Activated B cell treated with CpG ODN at 0.5 μM for 24 hours (primary cell): ENCODE measurements at regions of chr22 and their contacts with region 1.

Region 1: GRCh38 chr22:50620593-50621355 is 7.2 kb downstream of the ARSA start:
- DNase-seq: peak; percentile 74
- ATAC-seq: peak; percentile 79
- H3K4me3 Mint-ChIP-seq: peak overlapping the region; percentile 85
- H3K27ac Mint-ChIP-seq: peak overlapping the region; percentile 94
- H3K4me1 Mint-ChIP-seq: peaks cover 32% of the 10 kb centered on the region
- H3K27me3 Mint-ChIP-seq: no peaks in the 10 kb centered on the region
- CTCF ChIP-seq: no peak

Region 2: GRCh38 chr22:50148991-50149721 is 471.6 kb before region 1 on chr22:
- CTCF ChIA-PET with region 1: interaction called, 3 read pairs
- POLR2A ChIA-PET with region 1: no interaction called
- intact Hi-C with region 1: loop called (anchors 1 kb)
- DNase-seq: peak; percentile 67
- ATAC-seq: peak; percentile 98
- H3K4me3 Mint-ChIP-seq: no peak overlapping the region
- H3K27ac Mint-ChIP-seq: no peak overlapping the region
- H3K4me1 Mint-ChIP-seq: peaks cover 4% of the 10 kb centered on the region
- H3K27me3 Mint-ChIP-seq: no peaks in the 10 kb centered on the region
- CTCF ChIP-seq: peak; percentile 66

Region 3: DNA sequence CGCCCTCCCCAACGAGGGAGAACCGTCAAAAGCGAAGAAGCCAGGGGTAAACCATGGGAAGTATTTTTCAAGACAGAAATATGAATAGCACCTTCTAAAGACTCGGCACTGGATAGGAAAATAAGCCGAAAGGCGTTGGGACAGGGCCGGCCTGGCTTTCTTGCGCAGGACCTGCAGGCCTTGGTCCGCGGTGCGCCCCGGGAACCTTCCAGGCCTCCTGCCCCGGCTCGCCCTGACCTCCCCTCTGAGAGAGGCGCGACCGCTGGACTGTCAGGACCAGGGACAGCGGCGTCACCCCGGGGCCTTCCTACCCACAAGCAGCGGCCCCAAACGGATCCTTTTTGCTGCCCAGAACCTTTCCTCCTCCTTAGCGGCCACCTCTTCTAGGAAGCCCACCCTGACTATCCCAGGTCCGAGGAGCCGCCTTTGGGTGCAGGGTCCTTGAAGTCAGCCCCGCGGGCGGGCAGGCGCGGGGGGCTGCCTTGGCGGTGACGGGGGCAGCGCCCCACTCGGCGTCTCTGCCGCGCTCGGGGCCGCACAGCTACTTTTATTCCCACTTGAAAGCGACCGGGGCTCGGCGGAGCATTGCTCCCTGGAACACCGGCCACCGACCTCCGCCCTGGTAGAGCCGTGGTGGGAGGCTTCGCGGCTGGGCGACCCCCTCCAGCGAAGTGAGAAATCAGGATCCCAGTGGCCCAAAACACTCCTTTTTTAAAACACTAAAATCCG is 349.9 kb before region 1 on chr22:
- CTCF ChIA-PET with region 1: no interaction called
- POLR2A ChIA-PET with region 1: no interaction called
- intact Hi-C with region 1: loop called (anchors 1 kb)
- DNase-seq: peak; percentile 67
- ATAC-seq: peak; percentile 46
- H3K4me3 Mint-ChIP-seq: peak overlapping the region; percentile 73
- H3K27ac Mint-ChIP-seq: no peak overlapping the region
- H3K4me1 Mint-ChIP-seq: peaks cover 17% of the 10 kb centered on the region
- H3K27me3 Mint-ChIP-seq: no peaks in the 10 kb centered on the region
- CTCF ChIP-seq: no peak

Region 4: DNA sequence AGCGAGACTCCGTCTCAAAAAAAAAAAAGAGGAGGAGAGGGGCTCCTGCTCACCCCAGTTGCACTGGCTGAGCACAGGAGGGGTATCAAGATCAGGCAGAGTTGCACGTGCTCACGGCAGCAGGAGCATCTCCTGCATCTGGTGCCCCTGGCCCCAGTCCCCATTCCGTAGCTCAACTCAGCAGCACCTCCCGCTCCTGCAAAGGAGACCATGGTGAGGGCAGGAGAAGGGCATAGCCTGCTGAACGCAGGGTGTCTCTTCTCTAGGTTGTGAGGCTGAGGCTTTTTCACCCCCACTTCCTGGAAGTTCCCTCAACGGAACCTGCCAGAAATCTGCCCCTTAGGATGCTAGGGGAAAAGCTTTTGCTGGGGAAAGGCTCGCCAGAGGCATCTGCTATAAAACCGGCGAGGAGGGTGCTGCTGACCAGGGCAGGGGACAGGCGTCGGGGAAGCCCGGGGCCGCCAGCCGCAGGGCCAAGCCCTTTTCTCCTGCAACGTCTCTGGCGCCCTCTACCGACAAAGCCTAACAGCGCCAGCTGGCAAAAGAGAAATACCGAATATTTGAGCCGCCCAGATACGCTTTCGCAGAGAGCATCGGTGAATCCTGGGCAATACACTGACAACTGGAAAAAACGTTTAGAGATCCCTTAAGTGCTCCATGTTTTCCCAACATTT is 278.7 kb before region 1 on chr22:
- CTCF ChIA-PET with region 1: interaction called, 7 read pairs
- POLR2A ChIA-PET with region 1: no interaction called
- intact Hi-C with region 1: loop called (anchors 2 kb)
- DNase-seq: peak; percentile 80
- ATAC-seq: peak; percentile 61
- H3K4me3 Mint-ChIP-seq: peak overlapping the region; percentile 83
- H3K27ac Mint-ChIP-seq: peak overlapping the region; percentile 89
- H3K4me1 Mint-ChIP-seq: peaks cover 12% of the 10 kb centered on the region
- H3K27me3 Mint-ChIP-seq: no peaks in the 10 kb centered on the region
- CTCF ChIP-seq: peak; percentile 91

Region 5: GRCh38 chr22:50498322-50498890 is 122.4 kb before region 1 on chr22:
- CTCF ChIA-PET with region 1: interaction called, 9 read pairs
- POLR2A ChIA-PET with region 1: interaction called, 7 read pairs
- intact Hi-C with region 1: loop called (anchors 1 kb)
- DNase-seq: peak; percentile 38
- ATAC-seq: peak; percentile 95
- H3K4me3 Mint-ChIP-seq: no peak overlapping the region
- H3K27ac Mint-ChIP-seq: no peak overlapping the region
- H3K4me1 Mint-ChIP-seq: peaks cover 3% of the 10 kb centered on the region
- H3K27me3 Mint-ChIP-seq: no peaks in the 10 kb centered on the region
- CTCF ChIP-seq: no peak

Region 6: DNA sequence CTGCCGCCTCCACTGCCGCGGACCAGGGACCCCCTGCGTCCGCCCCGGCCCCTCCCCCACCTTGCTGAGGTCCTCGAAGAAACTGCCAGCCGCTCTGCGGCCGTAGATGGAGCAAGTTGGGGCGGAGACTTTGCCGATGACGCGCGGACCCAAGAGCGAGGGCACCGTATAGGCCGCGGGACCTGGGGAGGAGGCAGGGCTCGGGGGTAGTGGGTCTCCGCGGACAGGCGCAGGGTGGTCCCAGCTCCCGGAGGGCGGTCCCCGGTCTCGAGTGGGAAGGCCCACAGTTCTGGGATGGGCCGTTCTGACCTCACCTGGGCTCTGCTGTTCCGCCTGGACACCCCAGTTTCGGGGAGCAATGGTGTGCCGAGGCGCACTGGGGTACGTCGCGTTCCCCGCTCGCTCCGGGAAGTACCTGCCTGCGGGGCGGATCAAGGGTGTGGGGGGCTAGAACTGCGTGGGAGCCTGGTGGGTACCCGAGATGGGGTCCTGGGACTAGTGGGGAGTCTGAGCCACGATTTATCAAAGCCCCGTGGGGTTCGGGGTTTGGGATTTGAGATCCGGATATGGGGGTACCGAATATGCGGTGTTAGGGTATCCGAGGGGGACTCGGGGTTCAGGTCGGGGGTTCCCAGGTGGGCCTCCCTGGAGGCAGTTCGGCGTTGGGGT is 89.8 kb before region 1 on chr22:
- CTCF ChIA-PET with region 1: interaction called, 40 read pairs
- POLR2A ChIA-PET with region 1: interaction called, 94 read pairs
- intact Hi-C with region 1: loop called (anchors 1 kb)
- DNase-seq: peak; percentile 86
- ATAC-seq: peak; percentile 53
- H3K4me3 Mint-ChIP-seq: peak overlapping the region; percentile 92
- H3K27ac Mint-ChIP-seq: peak overlapping the region; percentile 99
- H3K4me1 Mint-ChIP-seq: peaks cover 55% of the 10 kb centered on the region
- H3K27me3 Mint-ChIP-seq: no peaks in the 10 kb centered on the region
- CTCF ChIP-seq: no peak

Region 7: GRCh38 chr22:50562523-50563412 is 58.0 kb before region 1 on chr22 and contains the start of gene SYCE3:
- CTCF ChIA-PET with region 1: interaction called, 11 read pairs
- POLR2A ChIA-PET with region 1: interaction called, 20 read pairs
- intact Hi-C with region 1: loop called (anchors 1 kb)
- DNase-seq: peak; percentile 97
- ATAC-seq: peak; percentile 98
- H3K4me3 Mint-ChIP-seq: peak within 1 kb of the TSS; percentile 95
- H3K27ac Mint-ChIP-seq: peak within 1 kb of the TSS; percentile 81
- H3K4me1 Mint-ChIP-seq: peaks cover 15% of the 10 kb centered on the region
- H3K27me3 Mint-ChIP-seq: peaks cover 1% of the 10 kb centered on the region
- CTCF ChIP-seq: peak; percentile 38
- total RNA-seq, gene SYCE3: not detected in 2 replicates

Region 8: GRCh38 chr22:50610041-50610451 is 10.7 kb before region 1 on chr22:
- CTCF ChIA-PET with region 1: no interaction called
- POLR2A ChIA-PET with region 1: no interaction called
- intact Hi-C with region 1: no loop called
- DNase-seq: no peak
- ATAC-seq: no peak
- H3K4me3 Mint-ChIP-seq: no peak overlapping the region
- H3K27ac Mint-ChIP-seq: no peak overlapping the region
- H3K4me1 Mint-ChIP-seq: no peaks in the 10 kb centered on the region
- H3K27me3 Mint-ChIP-seq: peaks cover 42% of the 10 kb centered on the region
- CTCF ChIP-seq: no peak

Region 9: DNA sequence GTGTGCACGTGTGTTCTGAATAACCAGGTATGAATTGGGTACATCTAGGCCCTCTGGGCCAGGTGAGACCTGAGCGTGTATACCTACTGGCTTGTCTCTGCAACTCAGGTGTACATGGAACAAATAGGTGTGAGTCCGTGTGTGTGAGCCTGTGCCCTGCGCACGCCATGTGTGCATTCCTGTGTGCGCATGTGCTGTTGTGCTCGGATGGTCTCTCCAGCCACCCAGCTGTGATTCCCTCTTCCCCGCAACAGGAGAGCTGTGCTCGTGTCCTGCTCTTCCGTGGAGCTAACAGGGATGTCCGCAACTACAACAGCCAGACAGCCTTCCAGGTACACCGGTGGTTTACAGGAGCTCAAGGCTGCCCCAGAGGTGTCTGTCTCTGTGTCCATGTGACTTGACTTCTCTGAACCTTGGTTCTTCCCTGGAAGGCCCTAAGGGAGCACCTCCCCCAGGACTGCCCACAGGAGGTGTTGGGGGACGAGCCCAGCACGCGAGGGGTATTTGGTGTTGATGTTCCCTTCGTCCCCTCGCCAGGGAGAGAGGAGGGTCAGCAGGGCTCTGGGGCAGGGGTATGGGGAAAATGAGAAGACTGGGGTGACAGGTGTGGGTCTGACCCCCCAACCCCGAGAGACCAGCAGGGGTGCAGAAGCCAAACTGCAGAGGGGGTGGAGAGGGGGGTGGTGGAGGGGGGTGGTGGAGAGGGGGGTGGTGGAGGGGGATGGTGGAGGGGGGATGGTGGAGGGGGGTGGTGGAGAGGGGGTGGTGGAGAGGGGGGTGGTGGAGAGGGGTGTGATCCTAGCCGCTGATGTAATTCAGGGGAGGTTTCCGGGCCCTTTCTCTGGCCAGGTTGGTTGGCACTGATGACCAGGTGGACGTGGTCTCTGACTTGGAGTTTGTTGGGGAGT is 62.6 kb after region 1 on chr22:
- CTCF ChIA-PET with region 1: no interaction called
- POLR2A ChIA-PET with region 1: no interaction called
- intact Hi-C with region 1: no loop called
- DNase-seq: no peak
- ATAC-seq: no peak
- H3K4me3 Mint-ChIP-seq: no peak overlapping the region
- H3K27ac Mint-ChIP-seq: no peak overlapping the region
- H3K4me1 Mint-ChIP-seq: peaks cover 4% of the 10 kb centered on the region
- H3K27me3 Mint-ChIP-seq: no peaks in the 10 kb centered on the region
- CTCF ChIP-seq: no peak

Region 10: GRCh38 chr22:50717709-50718351 is 97.1 kb after region 1 on chr22:
- CTCF ChIA-PET with region 1: no interaction called
- POLR2A ChIA-PET with region 1: no interaction called
- intact Hi-C with region 1: no loop called
- DNase-seq: no peak
- ATAC-seq: no peak
- H3K4me3 Mint-ChIP-seq: no peak overlapping the region
- H3K27ac Mint-ChIP-seq: no peak overlapping the region
- H3K4me1 Mint-ChIP-seq: no peaks in the 10 kb centered on the region
- H3K27me3 Mint-ChIP-seq: no peaks in the 10 kb centered on the region
- CTCF ChIP-seq: no peak

Region 11: DNA sequence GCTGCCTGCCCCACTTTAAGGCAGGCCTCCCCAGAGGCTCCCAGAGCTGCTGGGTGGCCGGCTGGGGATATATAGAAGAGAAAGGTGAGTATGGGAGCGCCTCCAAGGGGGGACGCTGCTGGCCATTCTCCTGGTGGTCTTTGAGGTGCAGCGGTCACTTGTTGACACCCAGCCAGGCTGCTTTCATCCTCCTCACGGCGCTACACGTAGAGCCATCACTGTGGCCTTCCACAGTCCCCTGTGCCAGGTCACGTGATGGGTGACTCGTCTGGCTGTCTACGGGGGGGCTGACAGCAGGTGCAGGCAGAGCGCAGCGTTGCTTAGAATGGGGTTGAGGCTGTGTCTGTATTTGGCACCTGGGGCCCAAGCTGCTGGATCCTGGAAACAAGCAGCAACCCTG is 119.1 kb after region 1 on chr22:
- CTCF ChIA-PET with region 1: no interaction called
- POLR2A ChIA-PET with region 1: no interaction called
- intact Hi-C with region 1: no loop called
- DNase-seq: no peak
- ATAC-seq: no peak
- H3K4me3 Mint-ChIP-seq: no peak overlapping the region
- H3K27ac Mint-ChIP-seq: no peak overlapping the region
- H3K4me1 Mint-ChIP-seq: no peaks in the 10 kb centered on the region
- H3K27me3 Mint-ChIP-seq: peaks cover 15% of the 10 kb centered on the region
- CTCF ChIP-seq: no peak